ENCODE measurements at regions of chr22 and their contacts with region 1.

Region 1: DNA sequence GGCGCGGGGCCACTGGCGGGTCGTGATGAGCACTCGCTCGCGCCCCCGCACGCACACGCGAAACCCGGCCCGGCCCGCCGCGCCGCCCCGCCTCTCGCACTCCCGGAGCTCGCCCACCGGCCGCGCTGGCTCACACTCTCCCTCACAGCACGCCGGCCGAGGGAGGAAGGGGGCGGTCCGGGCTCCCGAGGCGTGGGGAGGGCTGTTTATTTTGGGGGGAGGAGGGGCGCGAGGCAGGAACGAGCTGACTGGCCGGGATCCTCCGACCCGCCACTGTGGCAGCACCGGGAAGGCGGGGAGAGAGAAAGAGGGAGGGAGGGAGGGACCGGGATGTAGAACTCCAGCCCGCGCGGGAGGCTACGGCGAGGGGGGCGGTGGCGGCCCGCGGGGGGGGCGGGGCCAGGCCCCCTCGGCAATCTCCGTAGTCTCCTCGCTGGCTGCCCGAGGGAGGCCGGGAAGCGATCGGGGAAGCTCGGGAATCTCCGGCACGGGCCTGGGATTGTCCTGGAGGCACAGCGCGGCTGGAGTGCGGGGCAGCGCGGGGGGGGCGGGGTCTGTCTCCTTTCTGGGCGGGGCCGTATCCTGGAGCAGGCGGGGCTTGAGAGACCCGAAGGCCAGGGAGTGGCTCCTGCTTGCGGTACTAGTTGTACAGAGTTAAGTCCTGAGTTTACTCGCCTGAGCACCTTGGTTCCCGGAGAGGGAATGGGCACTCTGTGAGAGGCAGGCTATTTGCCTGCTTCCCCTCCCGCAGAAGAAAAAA is at the start of gene RBFOX2:
- H3K4me3 ChIP-seq: peak within 1 kb of the TSS; percentile 84
- H3K27ac ChIP-seq: peak within 1 kb of the TSS; percentile 77; the same call in 1 of the 2 replicates
- H3K4me1 ChIP-seq: peaks cover 9% of the 10 kb centered on the region
- CTCF ChIP-seq: no peak

Region 2: GRCh38 chr22:36017651-36018091 is 11.2 kb before region 1 on chr22:
- CTCF ChIA-PET with region 1: no interaction called
- POLR2A ChIA-PET with region 1: interaction called, 26 read pairs
- H3K4me3 ChIP-seq: no peak overlapping the region
- H3K27ac ChIP-seq: no peak overlapping the region
- H3K4me1 ChIP-seq: peaks cover 18% of the 10 kb centered on the region
- CTCF ChIP-seq: no peak

Region 3: DNA sequence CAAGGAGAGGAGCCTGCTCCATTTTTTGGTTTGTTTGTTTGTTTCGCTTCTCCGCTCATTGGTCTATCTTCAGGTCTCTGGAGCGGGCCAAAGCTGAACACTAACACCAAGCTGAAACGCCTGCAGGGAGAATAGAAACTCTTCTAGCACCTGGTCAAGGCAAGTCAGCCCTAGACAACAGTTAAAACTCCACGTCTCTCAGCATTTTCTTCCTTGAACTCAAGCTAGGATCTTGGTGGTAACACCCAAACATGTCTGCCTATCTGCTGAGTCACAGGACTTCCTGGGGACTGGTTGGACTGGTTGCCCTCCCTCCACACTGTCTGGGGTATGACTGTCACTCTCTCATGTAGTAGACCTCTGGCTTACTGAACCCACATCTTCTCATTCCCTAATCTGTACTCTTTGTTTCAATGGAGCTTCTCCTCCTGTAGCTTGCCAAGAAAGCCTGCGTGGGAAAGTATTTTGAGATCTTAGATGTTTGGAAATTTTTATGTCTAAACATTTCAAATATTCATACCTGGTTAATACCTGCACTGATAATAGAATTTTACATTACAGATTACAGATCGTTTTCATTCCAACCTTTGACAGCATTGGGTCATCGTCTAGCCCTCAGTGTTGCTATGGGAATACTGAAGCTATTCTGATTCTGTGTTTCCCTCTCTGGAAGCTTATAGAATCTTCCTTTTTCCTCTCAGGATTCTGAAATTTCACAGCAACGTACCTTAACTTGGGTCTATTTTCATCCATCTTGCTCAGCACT is 23.9 kb after region 1 on chr22:
- CTCF ChIA-PET with region 1: interaction called, 5 read pairs
- POLR2A ChIA-PET with region 1: interaction called, 11 read pairs
- H3K4me3 ChIP-seq: no peak overlapping the region
- H3K27ac ChIP-seq: no peak overlapping the region
- H3K4me1 ChIP-seq: 0 out of 2 replicates have a peak, but pooled peaks cover 3% of the 10 kb centered on the region
- CTCF ChIP-seq: no peak

Region 4: GRCh38 chr22:36239401-36240171 is 210.8 kb after region 1 on chr22 and contains the start of gene APOL2:
- CTCF ChIA-PET with region 1: no interaction called
- POLR2A ChIA-PET with region 1: no interaction called
- H3K4me3 ChIP-seq: peak within 1 kb of the TSS; percentile 49
- H3K27ac ChIP-seq: peak within 1 kb of the TSS; percentile 63
- H3K4me1 ChIP-seq: peaks cover 9% of the 10 kb centered on the region
- CTCF ChIP-seq: peak; percentile 90